ENCODE measurements at regions of chr1 and their contacts with region 1.

Region 1: GRCh38 chr1:203000226-203000944 is 6.8 kb upstream of the TMEM183A start:
- DNase-seq: no peak
- H3K4me3 ChIP-seq: no peak overlapping the region
- H3K27ac ChIP-seq: no peak overlapping the region
- H3K4me1 ChIP-seq: no peaks in the 10 kb centered on the region
- H3K27me3 ChIP-seq: no peaks in the 10 kb centered on the region
- CTCF ChIP-seq: no peak
- POLR2A ChIP-seq: no peak

Region 2: DNA sequence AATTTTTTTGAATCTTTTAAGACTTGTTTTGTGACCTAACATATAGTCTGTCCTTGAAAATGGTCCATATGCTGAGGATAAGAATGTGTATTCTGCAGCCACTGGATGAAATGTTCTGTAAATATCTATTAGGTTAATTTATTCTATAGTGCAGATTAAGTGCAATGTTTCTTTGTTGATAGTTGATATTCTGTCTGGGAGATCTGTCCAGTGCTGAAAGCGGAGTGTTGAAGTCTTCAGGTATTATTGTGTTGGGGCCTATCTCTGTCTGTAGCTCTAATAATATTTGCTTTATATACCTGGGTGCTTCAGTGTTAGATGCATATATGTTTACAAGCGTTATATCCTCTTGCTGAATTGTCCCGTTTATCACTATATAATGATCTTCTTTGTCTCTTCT is 65.6 kb before region 1 on chr1:
- intact Hi-C with region 1: loop called (anchors 5 kb)
- DNase-seq: no peak
- H3K4me3 ChIP-seq: no peak overlapping the region
- H3K27ac ChIP-seq: no peak overlapping the region
- H3K4me1 ChIP-seq: no peaks in the 10 kb centered on the region
- H3K27me3 ChIP-seq: no peaks in the 10 kb centered on the region
- CTCF ChIP-seq: no peak
- POLR2A ChIP-seq: no peak

Region 3: GRCh38 chr1:203099805-203100516 is 99.6 kb after region 1 on chr1:
- intact Hi-C with region 1: no loop called
- DNase-seq: no peak
- H3K4me3 ChIP-seq: no peak overlapping the region
- H3K27ac ChIP-seq: no peak overlapping the region
- H3K4me1 ChIP-seq: no peaks in the 10 kb centered on the region
- H3K27me3 ChIP-seq: no peaks in the 10 kb centered on the region
- CTCF ChIP-seq: no peak
- POLR2A ChIP-seq: no peak

Measured in thyroid gland (tissue), 4 donors.